ENCODE measurements at regions of chr12 and their contacts with region 1.

Region 1: DNA sequence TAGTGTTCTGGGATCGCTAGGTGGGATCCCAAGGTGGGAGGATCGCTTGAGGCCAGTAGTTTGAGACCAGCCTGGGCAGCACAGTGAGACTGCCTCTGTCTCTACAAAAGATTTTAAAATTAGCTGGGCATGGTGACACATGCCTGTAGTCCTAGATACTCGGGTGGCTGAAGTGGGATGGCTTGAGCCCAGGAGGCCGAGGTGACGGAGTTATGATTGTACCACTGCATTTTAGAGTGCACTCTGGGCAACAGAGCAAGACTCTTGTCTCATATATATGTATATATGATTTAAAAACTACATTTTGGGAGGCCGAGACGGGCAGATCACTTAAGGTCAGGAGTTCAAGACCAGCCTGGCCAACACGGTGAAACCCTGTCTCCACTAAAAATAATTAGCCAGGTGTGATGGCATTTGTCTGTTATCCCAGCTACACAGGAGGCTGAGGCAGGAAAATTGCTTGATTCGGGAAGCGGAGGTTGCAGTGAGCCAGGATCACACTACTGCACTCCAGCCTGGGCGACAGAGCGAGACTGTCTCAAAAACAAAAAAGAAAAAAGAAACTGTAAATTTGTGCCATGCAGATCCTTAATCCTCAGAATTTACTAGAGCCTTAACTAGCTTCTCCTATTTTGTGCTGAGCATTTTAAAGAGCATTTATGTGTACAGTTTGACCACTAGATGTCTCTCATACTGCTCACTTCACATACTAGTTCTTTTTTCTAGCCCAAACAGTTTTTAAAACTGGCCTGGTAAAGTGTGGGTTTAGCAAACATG is 114.8 kb downstream of the MON2 start:
- DNase-seq: no peak
- H3K4me3 ChIP-seq: no peak overlapping the region
- H3K27ac ChIP-seq: no peak overlapping the region
- H3K4me1 ChIP-seq: no peaks in the 10 kb centered on the region
- H3K27me3 ChIP-seq: no peaks in the 10 kb centered on the region
- CTCF ChIP-seq: peak in 10 of 11 experiments; percentile 25 to 69 (median 56)
- POLR2A ChIP-seq: no peak

Region 2: GRCh38 chr12:62379026-62379722 is 202.3 kb before region 1 on chr12:
- intact Hi-C with region 1: no loop called
- DNase-seq: no peak
- H3K4me3 ChIP-seq: no peak overlapping the region
- H3K27ac ChIP-seq: no peak overlapping the region
- H3K4me1 ChIP-seq: peaks cover 0 to 13% (median 2%) of the 10 kb centered on the region in 6 donors
- H3K27me3 ChIP-seq: no peaks in the 10 kb centered on the region
- CTCF ChIP-seq: no peak
- POLR2A ChIP-seq: no peak

Region 3: GRCh38 chr12:62435303-62436163 is 145.9 kb before region 1 on chr12:
- intact Hi-C with region 1: loop called (anchors 5 kb)
- DNase-seq: peak; percentile 81
- H3K4me3 ChIP-seq: peak overlapping the region; percentile 19 to 66 (median 44)
- H3K27ac ChIP-seq: no peak overlapping the region
- H3K4me1 ChIP-seq: peaks cover 6 to 22% (median 19%) of the 10 kb centered on the region in 6 donors
- H3K27me3 ChIP-seq: peaks cover 0 to 48% (median 6%) of the 10 kb centered on the region in 7 donors
- CTCF ChIP-seq: peak in 6 of 11 experiments; percentile 11 to 55 (median 38)
- POLR2A ChIP-seq: no peak

Region 4: GRCh38 chr12:62711631-62712241 is 130.3 kb after region 1 on chr12:
- intact Hi-C with region 1: no loop called
- DNase-seq: no peak
- H3K4me3 ChIP-seq: no peak overlapping the region
- H3K27ac ChIP-seq: no peak overlapping the region
- H3K4me1 ChIP-seq: peaks cover 0 to 12% (median 0%) of the 10 kb centered on the region in 6 donors
- H3K27me3 ChIP-seq: no peaks in the 10 kb centered on the region
- CTCF ChIP-seq: no peak
- POLR2A ChIP-seq: no peak

Region 5: GRCh38 chr12:62799126-62799736 is 217.8 kb after region 1 on chr12:
- intact Hi-C with region 1: loop called (anchors 5 kb)
- DNase-seq: no peak
- H3K4me3 ChIP-seq: no peak overlapping the region
- H3K27ac ChIP-seq: no peak overlapping the region
- H3K4me1 ChIP-seq: peaks cover 0 to 2% (median 1%) of the 10 kb centered on the region in 6 donors
- H3K27me3 ChIP-seq: no peaks in the 10 kb centered on the region
- CTCF ChIP-seq: peak; percentile 77 to 92 (median 86)
- POLR2A ChIP-seq: no peak